Activated B cell treated with CpG ODN at 0.5 μM for 24 hours (primary cell): ENCODE measurements at regions of chr14 and their contacts with region 1.

Region 1: DNA sequence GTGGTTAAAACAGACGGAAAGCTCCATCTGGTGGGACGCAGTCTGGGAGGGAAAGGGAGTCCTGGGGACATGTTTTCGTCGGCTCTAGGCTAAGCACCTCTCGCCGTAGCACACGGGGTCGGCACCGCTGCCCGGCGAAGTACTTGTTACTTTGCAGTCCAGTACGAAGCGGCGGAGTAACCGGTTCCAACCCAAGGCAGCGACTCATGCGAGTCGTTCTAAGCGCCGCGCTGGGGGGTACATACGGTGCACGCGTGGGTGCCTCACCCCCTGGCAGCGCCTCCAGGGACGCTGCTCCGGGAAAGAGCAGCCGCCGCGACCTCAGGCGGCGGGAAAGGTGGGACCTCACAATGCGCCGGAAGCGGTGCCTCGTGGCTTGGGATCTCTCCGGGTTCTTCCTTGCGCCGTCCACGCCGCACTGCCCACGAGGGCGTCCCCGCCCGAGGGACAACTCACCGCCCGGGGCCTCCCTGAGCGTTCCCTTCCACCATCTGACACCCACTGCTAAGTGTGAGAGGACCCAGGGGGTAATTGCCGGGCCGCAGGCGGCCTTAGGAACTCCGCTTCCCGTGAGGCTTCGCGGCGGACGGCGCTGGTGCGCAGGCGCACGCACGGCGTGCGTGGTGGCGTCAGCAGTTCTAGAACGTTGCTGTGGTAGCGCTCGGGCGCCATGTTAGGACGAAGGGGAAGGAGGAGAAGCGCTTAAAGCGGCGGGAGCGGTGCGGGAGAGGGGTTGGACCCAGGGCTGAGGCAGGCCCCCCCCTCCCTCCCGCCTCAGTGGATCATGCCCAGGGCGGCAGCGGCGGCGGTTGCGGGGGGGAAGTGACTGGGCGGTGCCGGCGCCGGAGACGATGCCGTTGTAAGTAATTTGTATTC is at the start of gene PAPOLA:
- DNase-seq: peak; percentile 96
- ATAC-seq: peak; percentile 85
- H3K4me3 Mint-ChIP-seq: peak within 1 kb of the TSS; percentile 99
- H3K27ac Mint-ChIP-seq: peak within 1 kb of the TSS; percentile 97
- H3K4me1 Mint-ChIP-seq: peaks cover 64% of the 10 kb centered on the region
- H3K27me3 Mint-ChIP-seq: no peaks in the 10 kb centered on the region
- CTCF ChIP-seq: no peak
- total RNA-seq, gene PAPOLA: 205 and 255 TPM in 2 replicates

Region 2: DNA sequence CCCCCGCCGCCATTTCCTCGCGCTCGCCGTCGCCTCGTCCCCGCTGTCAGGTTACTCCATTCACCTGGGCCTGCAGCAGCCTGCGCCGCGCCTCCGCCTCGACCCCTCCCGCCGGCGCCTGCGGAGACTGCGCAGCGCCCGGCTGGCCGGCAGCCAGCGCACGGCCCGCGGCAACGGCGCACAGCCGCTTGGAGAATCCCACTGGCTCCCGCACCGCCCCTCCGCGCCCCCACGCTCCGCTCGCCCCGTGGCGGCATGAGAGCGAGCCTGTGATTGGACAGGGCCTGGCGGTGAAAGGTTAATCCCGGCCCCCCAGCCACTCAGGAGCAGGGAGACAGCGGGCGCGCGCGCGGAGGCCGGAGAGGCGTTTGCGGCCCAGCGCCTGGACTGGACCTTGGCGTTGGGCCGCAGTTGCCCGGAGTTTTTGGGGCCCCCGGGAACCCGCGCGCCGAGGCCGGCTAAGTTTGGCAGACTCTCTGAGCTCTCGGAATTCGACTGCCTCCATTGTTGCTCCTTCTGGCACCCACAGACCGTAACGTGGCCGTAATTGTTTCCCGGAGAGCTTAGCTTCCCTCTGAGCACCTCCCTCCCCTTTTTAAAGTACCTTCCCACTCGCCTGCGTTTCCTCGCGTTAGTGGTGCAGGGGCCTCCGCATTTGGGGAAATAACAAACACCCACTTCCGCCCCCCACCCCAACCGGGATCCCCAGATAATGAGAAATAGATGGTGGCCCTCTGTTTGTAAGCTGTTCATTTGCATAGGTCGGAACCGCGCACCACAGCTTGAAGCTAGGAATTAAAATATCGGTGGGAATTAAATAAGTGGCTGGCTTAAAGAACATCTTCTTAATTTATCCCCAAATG is 1344.4 kb before region 1 on chr14 and contains the start of gene DICER1:
- CTCF ChIA-PET with region 1: no interaction called
- POLR2A ChIA-PET with region 1: no interaction called
- intact Hi-C with region 1: loop called (anchors 5 kb)
- DNase-seq: peak; percentile 96
- ATAC-seq: peak; percentile 87
- H3K4me3 Mint-ChIP-seq: peak within 1 kb of the TSS; percentile 97
- H3K27ac Mint-ChIP-seq: peak within 1 kb of the TSS; percentile 100
- H3K4me1 Mint-ChIP-seq: peaks cover 45% of the 10 kb centered on the region
- H3K27me3 Mint-ChIP-seq: no peaks in the 10 kb centered on the region
- CTCF ChIP-seq: no peak
- total RNA-seq, gene DICER1: 67.3 and 69.6 TPM in 2 replicates

Region 3: GRCh38 chr14:96391293-96392118 is 110.5 kb before region 1 on chr14:
- CTCF ChIA-PET with region 1: no interaction called
- POLR2A ChIA-PET with region 1: no interaction called
- intact Hi-C with region 1: loop called (anchors 1 kb)
- DNase-seq: peak; percentile 100
- ATAC-seq: peak; percentile 93
- H3K4me3 Mint-ChIP-seq: peak overlapping the region; percentile 91
- H3K27ac Mint-ChIP-seq: peak overlapping the region; percentile 88
- H3K4me1 Mint-ChIP-seq: peaks cover 6% of the 10 kb centered on the region
- H3K27me3 Mint-ChIP-seq: peaks cover 3% of the 10 kb centered on the region
- CTCF ChIP-seq: no peak

Region 4: GRCh38 chr14:96486705-96487104 is 15.3 kb before region 1 on chr14:
- CTCF ChIA-PET with region 1: interaction called, 3 read pairs
- POLR2A ChIA-PET with region 1: interaction called, 15 read pairs
- intact Hi-C with region 1: loop called (anchors 2 kb)
- DNase-seq: no peak
- ATAC-seq: peak; percentile 84
- H3K4me3 Mint-ChIP-seq: peak overlapping the region; percentile 24
- H3K27ac Mint-ChIP-seq: peak overlapping the region; percentile 59
- H3K4me1 Mint-ChIP-seq: peaks cover 36% of the 10 kb centered on the region
- H3K27me3 Mint-ChIP-seq: no peaks in the 10 kb centered on the region
- CTCF ChIP-seq: no peak

Region 5: DNA sequence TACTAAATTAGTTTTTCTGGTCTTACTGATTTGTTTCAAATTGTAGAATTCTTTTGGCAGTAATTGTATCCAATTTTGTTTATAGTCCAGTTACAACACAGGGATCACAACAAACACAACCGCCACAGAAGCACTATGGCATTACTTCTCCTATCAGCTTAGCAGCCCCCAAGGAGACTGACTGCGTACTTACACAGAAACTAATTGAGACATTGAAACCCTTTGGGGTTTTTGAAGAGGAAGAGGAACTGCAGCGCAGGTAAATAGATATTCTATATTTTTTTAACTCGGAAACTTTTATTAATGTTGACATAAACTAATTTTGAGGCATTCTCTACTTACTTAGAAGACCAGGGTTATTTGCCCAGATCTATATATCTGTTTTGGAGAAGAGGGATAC is 18.0 kb after region 1 on chr14:
- CTCF ChIA-PET with region 1: no interaction called
- POLR2A ChIA-PET with region 1: interaction called, 8 read pairs
- intact Hi-C with region 1: loop called (anchors 1 kb)
- DNase-seq: no peak
- ATAC-seq: peak; percentile 88
- H3K4me3 Mint-ChIP-seq: peak overlapping the region; percentile 42
- H3K27ac Mint-ChIP-seq: peak overlapping the region; percentile 80
- H3K4me1 Mint-ChIP-seq: peaks cover 42% of the 10 kb centered on the region
- H3K27me3 Mint-ChIP-seq: no peaks in the 10 kb centered on the region
- CTCF ChIP-seq: no peak

Region 6: DNA sequence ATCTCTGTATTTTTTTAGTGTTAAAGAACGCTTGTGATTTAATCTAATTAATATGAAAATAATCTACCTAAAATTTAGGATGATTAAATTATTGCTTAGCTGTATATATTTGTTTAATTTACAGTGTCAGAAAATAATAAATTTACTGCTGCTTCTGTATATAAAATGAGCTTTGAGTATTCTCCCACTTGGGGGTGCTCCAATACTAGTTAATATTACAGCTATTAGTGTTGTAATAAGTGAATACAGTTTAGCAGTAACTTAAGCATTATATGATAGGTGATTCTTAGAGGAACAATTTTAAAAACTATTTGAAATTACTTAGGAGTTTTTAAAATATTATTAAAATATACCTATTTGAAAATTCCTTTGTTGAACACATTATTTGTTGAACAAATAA is 62.4 kb after region 1 on chr14:
- CTCF ChIA-PET with region 1: no interaction called
- POLR2A ChIA-PET with region 1: no interaction called
- intact Hi-C with region 1: no loop called
- DNase-seq: no peak
- ATAC-seq: no peak
- H3K4me3 Mint-ChIP-seq: no peak overlapping the region
- H3K27ac Mint-ChIP-seq: no peak overlapping the region
- H3K4me1 Mint-ChIP-seq: peaks cover 3% of the 10 kb centered on the region
- H3K27me3 Mint-ChIP-seq: no peaks in the 10 kb centered on the region
- CTCF ChIP-seq: no peak

Region 7: DNA sequence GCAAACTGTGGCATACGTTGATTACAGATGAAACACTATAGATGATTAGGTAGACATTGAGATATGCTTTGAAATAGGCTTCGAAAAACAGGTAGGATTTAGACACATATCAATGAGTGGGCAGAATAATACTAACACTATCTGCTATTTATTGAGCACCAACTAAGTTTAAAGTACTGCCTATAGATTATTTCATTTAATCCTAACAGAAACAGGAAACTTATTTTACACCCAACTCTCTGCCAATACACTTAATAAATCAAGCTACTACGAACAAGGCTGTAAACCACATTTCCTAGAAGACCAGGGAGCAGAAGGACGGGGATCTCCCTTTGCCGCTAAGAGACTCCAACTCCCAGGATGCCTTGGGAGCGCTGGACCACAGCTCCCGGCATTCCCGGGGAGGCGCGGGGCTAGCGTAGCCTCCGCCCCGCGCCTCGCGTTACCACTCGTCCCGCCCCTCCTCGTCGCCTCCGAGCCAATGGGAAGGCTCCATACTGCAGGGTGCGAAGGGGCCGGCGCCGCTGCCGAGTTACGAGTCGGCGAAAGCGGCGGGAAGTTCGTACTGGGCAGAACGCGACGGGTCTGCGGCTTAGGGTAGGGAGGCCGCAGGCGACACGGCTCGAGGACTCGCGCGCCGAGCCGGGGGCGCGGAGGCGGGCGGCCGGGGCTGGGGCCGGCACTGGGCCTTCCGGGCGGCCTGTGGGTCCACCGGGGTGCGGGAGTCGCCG is 295.0 kb after region 1 on chr14 and contains the start of gene VRK1:
- CTCF ChIA-PET with region 1: no interaction called
- POLR2A ChIA-PET with region 1: no interaction called
- intact Hi-C with region 1: loop called (anchors 1 kb)
- DNase-seq: peak; percentile 92
- ATAC-seq: peak; percentile 98
- H3K4me3 Mint-ChIP-seq: peak within 1 kb of the TSS; percentile 87
- H3K27ac Mint-ChIP-seq: peak within 1 kb of the TSS; percentile 74
- H3K4me1 Mint-ChIP-seq: peaks cover 24% of the 10 kb centered on the region
- H3K27me3 Mint-ChIP-seq: peaks cover 18% of the 10 kb centered on the region
- CTCF ChIP-seq: no peak
- total RNA-seq, gene VRK1: 30.2 and 32.1 TPM in 2 replicates